ENCODE measurements at regions of chr3 and their contacts with region 1.

Region 1: GRCh38 chr3:12658593-12659058 is 5.3 kb downstream of the RAF1 start:
- DNase-seq: no peak
- ATAC-seq: no peak
- H3K4me3 ChIP-seq: no peak overlapping the region
- H3K27ac ChIP-seq: peak overlapping the region in 9 of 10 donors; percentile 32 to 100 (median 98)
- H3K4me1 ChIP-seq: peaks cover 8 to 84% (median 69%) of the 10 kb centered on the region in 9 donors
- H3K27me3 ChIP-seq: no peaks in the 10 kb centered on the region
- CTCF ChIP-seq: no peak

Region 2: DNA sequence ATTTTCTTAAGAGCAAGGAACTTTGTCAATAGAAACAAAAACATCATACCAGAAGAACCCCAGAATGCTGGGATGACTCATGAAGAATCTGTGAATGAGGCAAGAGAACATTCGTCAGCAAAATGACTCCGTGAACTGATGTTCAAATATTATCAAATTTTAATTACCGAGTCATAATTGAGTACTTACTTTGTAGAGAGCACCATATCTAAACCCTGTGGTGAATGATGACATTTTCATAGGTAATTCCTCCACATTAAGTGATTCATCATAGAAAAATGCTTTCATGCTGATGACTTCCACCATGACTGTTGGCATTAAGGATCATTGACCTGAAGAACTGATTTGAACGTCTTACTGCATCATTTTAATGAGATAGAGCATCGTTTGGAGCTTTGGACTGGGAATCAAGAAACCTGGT is 313.5 kb before region 1 on chr3:
- intact Hi-C with region 1: no loop called
- DNase-seq: no peak
- ATAC-seq: no peak
- H3K4me3 ChIP-seq: no peak overlapping the region
- H3K27ac ChIP-seq: no peak overlapping the region
- H3K4me1 ChIP-seq: peaks cover 0 to 13% (median 3%) of the 10 kb centered on the region in 9 donors
- H3K27me3 ChIP-seq: no peaks in the 10 kb centered on the region
- CTCF ChIP-seq: no peak

Region 3: DNA sequence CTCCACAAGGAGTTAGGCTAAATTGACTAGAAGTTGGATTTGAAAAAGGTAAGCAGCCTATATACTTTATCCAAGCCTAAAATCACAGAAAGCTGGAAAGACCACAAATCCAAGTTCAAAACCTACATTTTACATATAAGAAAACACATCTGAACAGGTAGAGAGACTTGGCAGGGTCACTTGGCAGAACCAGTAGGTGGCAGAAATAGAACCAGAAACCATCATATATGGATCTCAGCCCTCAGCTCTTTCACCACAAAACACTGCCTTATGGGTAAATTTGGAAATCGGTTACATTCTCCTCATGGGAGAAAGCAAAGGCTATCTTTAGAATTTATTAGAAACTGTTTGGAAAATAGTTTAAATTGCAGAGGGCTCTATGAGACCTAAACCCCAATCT is 57.6 kb before region 1 on chr3:
- intact Hi-C with region 1: loop called in 2 of 10 experiments (anchors 5 to 10 kb)
- DNase-seq: no peak
- ATAC-seq: no peak
- H3K4me3 ChIP-seq: no peak overlapping the region
- H3K27ac ChIP-seq: peak overlapping the region in 1 of 10 donors; percentile 5
- H3K4me1 ChIP-seq: peaks cover 0 to 20% (median 0%) of the 10 kb centered on the region in 9 donors
- H3K27me3 ChIP-seq: no peaks in the 10 kb centered on the region
- CTCF ChIP-seq: peak in 4 of 9 donors; percentile 17 to 43 (median 41)

Region 4: GRCh38 chr3:12618426-12618825 is 40.2 kb before region 1 on chr3:
- intact Hi-C with region 1: loop called in 1 of 10 experiments (anchors 2 kb)
- DNase-seq: no peak
- ATAC-seq: no peak
- H3K4me3 ChIP-seq: no peak overlapping the region
- H3K27ac ChIP-seq: no peak overlapping the region
- H3K4me1 ChIP-seq: peaks cover 3 to 48% (median 30%) of the 10 kb centered on the region in 9 donors
- H3K27me3 ChIP-seq: no peaks in the 10 kb centered on the region
- CTCF ChIP-seq: no peak

Region 5: GRCh38 chr3:12681943-12682390 is 23.3 kb after region 1 on chr3:
- intact Hi-C with region 1: no loop called
- DNase-seq: peak in 1 of 2 donors; percentile 26
- ATAC-seq: peak; percentile 53 to 89 (median 78)
- H3K4me3 ChIP-seq: no peak overlapping the region
- H3K27ac ChIP-seq: peak overlapping the region; percentile 1 to 93 (median 64)
- H3K4me1 ChIP-seq: peaks cover 0 to 22% (median 11%) of the 10 kb centered on the region in 9 donors
- H3K27me3 ChIP-seq: no peaks in the 10 kb centered on the region
- CTCF ChIP-seq: no peak

Region 6: GRCh38 chr3:12730506-12731242 is 72.0 kb after region 1 on chr3:
- intact Hi-C with region 1: no loop called
- DNase-seq: no peak
- ATAC-seq: no peak
- H3K4me3 ChIP-seq: no peak overlapping the region
- H3K27ac ChIP-seq: peak overlapping the region in 4 of 10 donors; percentile 11 to 78 (median 54)
- H3K4me1 ChIP-seq: peaks cover 0 to 31% (median 12%) of the 10 kb centered on the region in 9 donors
- H3K27me3 ChIP-seq: no peaks in the 10 kb centered on the region
- CTCF ChIP-seq: no peak

Region 7: DNA sequence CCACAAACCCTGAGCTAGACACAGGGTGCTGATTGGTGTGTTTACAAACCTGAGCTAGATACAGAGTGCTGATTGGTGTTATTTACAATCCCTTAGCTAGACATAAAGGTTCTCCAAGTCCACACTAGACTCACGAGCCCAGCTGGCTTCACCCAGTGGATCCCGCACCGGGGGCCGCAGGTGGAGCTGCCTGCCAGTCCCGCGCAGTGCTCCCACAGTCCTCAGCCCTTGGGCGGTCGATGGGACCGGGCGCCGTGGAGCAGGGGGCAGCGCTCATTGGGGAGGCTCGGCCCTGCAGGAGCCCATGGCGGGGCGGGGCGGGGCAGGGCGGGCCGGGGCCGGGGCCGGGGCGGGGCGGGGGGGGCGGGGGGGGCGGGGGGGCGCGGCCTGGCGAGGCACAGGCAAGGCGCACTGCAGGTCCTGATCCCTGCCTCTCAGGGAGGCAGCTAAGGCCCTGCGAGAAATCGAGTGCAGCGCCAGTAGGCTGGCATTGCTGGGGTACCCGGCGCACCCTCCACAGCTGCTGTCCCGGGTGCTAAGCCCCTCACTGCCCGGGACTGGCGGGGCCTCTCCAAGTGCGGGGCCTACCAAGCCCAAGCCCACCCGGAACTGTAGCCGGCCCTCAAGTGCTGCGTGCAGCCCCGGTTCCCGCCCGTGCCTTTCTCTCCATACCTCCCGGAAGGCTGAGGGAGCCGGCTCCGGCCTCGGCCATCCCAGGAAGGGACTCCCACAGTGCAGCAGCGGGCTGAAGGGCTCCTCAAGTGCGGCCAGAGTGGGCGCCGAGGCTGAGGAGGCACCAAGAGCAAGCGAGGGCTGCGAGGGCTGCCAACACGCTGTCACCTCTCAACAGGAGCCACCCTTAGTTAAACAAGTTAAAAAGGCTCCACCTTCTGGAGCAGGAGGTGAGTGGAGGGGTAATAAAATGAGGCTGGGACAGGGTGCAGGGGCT is 110.2 kb after region 1 on chr3:
- intact Hi-C with region 1: no loop called
- DNase-seq: no peak
- ATAC-seq: peak in 2 of 8 donors; percentile 33 to 41
- H3K4me3 ChIP-seq: no peak overlapping the region
- H3K27ac ChIP-seq: no peak overlapping the region
- H3K4me1 ChIP-seq: peaks cover 0 to 16% (median 3%) of the 10 kb centered on the region in 9 donors
- H3K27me3 ChIP-seq: no peaks in the 10 kb centered on the region
- CTCF ChIP-seq: no peak

Measured in heart right ventricle (tissue), 16 donors.